ENCODE measurements at regions of chr9 and their contacts with region 1.

Region 1: DNA sequence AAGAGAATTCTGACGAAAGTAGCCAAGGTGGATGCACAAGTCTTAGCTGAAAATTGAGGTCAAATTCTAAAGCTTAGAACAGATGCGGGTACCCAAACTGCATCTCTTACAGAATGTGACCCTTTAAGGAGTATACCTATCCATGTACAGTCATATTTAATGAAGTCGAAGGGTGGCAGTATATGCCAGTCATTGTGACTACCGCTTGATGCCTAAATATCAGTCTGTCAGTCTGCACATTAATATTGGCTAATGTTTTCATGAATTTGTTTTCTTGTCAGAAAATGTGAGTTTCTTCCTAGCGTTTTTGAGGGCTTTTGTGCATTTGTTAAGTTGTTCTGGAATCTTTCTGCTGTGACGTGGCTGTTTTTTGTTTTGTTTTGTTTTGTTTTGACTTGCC is 264.5 kb upstream of the ELAVL2 start:
- DNase-seq: no peak
- H3K4me3 ChIP-seq: no peak overlapping the region
- H3K27ac ChIP-seq: no peak overlapping the region
- H3K4me1 ChIP-seq: no peaks in the 10 kb centered on the region
- H3K27me3 ChIP-seq: no peaks in the 10 kb centered on the region
- CTCF ChIP-seq: no peak
- POLR2A ChIP-seq: no peak

Region 2: DNA sequence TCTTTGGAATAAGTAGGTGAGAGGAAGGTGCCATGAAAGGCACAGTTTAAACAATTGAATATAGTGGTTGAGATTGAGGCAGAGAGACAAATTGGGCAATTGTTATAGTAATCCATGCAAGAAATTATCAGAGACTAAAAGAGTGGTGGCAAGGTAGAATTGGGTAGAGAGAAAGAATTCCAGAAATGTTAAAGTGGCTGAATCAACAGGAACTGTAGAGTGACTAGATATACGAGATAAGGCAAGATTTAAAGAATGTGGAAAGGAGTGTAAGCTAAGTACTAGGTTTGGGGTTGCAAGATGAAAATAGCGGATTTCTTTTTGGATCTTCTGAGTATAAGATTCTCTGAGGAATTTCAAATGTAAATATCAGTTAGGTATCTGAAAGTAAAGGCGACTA is 1358.8 kb before region 1 on chr9:
- CTCF ChIA-PET with region 1: no interaction called
- POLR2A ChIA-PET with region 1: no interaction called
- dilution Hi-C with region 1: no loop called
- intact Hi-C with region 1: loop called (anchors 10 kb)
- DNase-seq: no peak
- H3K4me3 ChIP-seq: no peak overlapping the region
- H3K27ac ChIP-seq: no peak overlapping the region
- H3K4me1 ChIP-seq: no peaks in the 10 kb centered on the region
- H3K27me3 ChIP-seq: no peaks in the 10 kb centered on the region
- CTCF ChIP-seq: no peak
- POLR2A ChIP-seq: no peak

Measured in endothelial cell of umbilical vein (primary cell).